ENCODE measurements at regions of chr1 and their contacts with region 1.

Region 1: GRCh38 chr1:78607334-78607927 is 12.8 kb upstream of the IFI44L start:
- DNase-seq: no peak
- ATAC-seq: no peak
- H3K4me3 ChIP-seq: no peak overlapping the region
- H3K27ac ChIP-seq: no peak overlapping the region
- H3K4me1 ChIP-seq: peaks cover 0 to 11% (median 0%) of the 10 kb centered on the region in 12 donors
- H3K27me3 ChIP-seq: peaks cover 0 to 7% (median 0%) of the 10 kb centered on the region in 9 donors
- CTCF ChIP-seq: peak; percentile 16 to 69 (median 48)
- POLR2A ChIP-seq: no peak

Region 2: DNA sequence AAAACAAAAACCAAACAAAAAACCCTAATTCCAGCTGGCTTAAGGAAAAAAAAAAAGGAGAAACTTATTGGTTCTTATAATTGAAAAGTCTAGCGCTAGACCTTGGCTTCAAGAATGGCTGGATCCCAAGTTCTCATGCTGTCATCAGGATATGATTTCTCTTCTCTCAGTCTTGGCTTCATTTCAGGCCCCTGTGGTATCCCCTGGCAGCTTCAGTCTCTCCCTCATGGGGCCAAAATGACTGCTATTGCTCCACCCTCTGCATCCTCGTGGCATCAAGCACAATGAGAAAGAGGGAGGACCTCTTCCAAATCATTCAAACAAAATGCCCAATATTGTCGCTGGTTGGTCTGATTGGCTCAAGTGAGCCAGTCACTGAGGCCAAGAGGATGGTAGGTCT is 480.9 kb before region 1 on chr1:
- intact Hi-C with region 1: loop called in 4 of 10 experiments (anchors 2 to 5 kb)
- DNase-seq: no peak
- ATAC-seq: no peak
- H3K4me3 ChIP-seq: no peak overlapping the region
- H3K27ac ChIP-seq: no peak overlapping the region
- H3K4me1 ChIP-seq: no peaks in the 10 kb centered on the region
- H3K27me3 ChIP-seq: no peaks in the 10 kb centered on the region
- CTCF ChIP-seq: no peak
- POLR2A ChIP-seq: no peak

Region 3: DNA sequence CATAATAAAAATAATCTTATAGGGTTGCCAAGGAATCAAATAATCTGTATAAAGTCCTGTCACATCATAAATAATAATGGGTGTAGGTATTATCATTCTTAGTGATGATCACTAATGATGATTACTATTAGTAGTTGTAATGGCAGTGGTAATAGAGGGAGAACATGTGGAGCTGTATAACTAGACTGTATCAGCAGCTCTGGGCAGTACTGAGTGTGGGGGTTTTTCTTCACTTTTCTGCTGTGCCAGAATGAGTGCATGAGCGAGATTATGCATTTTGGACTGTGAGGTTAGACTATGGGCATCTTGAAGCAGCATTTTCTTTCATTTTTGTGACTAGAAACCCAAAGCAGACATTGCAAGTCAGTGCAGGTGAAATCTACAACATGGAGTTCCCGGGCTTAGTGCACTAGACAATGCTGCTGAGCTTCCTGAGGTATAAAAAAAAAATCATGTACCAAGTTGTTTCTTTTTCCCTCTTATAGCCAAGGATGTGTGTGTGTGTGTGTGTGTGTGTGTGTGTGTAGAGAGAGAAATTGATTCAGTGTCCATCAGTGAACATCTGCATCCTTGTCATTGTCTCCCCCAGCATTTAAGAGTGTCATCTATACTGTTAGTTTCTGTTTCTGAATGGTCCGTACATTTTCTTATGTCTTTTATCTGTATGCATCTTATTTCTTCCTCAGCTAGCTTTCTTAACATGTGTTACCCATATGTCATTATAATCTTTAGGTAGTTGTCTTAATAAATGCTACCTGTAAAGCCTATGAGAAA is 475.1 kb before region 1 on chr1:
- intact Hi-C with region 1: loop called in 4 of 10 experiments (anchors 2 to 5 kb)
- DNase-seq: no peak
- ATAC-seq: no peak
- H3K4me3 ChIP-seq: no peak overlapping the region
- H3K27ac ChIP-seq: no peak overlapping the region
- H3K4me1 ChIP-seq: no peaks in the 10 kb centered on the region
- H3K27me3 ChIP-seq: no peaks in the 10 kb centered on the region
- CTCF ChIP-seq: no peak
- POLR2A ChIP-seq: no peak

Region 4: GRCh38 chr1:78145105-78145580 is 462.3 kb before region 1 on chr1:
- intact Hi-C with region 1: loop called (anchors 5 to 10 kb)
- DNase-seq: peak in 3 of 5 donors; percentile 34 to 38 (median 34)
- ATAC-seq: peak in 3 of 4 donors; percentile 56 to 76 (median 74)
- H3K4me3 ChIP-seq: no peak overlapping the region
- H3K27ac ChIP-seq: no peak overlapping the region
- H3K4me1 ChIP-seq: peaks cover 0 to 9% (median 0%) of the 10 kb centered on the region in 12 donors
- H3K27me3 ChIP-seq: no peaks in the 10 kb centered on the region
- CTCF ChIP-seq: peak; percentile 52 to 92 (median 80)
- POLR2A ChIP-seq: no peak

Region 5: DNA sequence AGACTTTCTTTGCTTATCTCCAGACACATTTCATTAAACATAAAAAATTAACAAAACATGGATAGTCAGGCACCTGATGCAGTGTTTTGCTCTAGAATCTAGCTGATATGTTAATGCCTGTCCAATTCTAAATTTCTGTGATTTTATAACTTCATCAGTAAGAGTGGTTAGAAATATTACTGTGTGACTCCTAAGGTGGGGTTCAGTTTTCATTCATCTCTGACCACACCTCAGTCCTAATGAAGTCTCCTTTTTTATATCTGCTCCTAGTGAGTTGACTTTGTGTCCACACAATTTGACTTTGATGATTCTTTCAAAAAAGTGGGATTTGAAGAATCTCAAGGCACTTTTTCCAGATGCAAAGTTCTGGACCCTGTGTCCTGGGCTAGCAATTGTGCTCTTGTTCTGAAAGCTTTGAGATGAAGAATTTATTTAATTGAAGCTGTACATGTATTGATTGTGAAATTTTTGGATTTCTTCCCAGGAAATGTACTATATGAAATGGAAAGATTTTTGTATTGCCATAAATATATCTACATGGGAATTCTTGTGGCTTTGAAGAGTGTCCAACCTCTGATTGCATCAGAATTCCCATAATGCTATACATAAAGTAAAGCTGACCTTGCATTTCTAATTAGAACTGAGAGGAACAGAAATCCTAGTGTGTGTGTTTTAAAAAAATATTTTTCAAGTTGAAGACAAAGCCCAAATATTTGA is 450.5 kb before region 1 on chr1:
- intact Hi-C with region 1: loop called in 1 of 10 experiments (anchors 10 kb)
- DNase-seq: no peak
- ATAC-seq: no peak
- H3K4me3 ChIP-seq: no peak overlapping the region
- H3K27ac ChIP-seq: no peak overlapping the region
- H3K4me1 ChIP-seq: no peaks in the 10 kb centered on the region
- H3K27me3 ChIP-seq: no peaks in the 10 kb centered on the region
- CTCF ChIP-seq: no peak
- POLR2A ChIP-seq: no peak

Region 6: GRCh38 chr1:78543941-78544643 is 63.3 kb before region 1 on chr1:
- intact Hi-C with region 1: no loop called
- DNase-seq: no peak
- ATAC-seq: no peak
- H3K4me3 ChIP-seq: no peak overlapping the region
- H3K27ac ChIP-seq: no peak overlapping the region
- H3K4me1 ChIP-seq: no peaks in the 10 kb centered on the region
- H3K27me3 ChIP-seq: no peaks in the 10 kb centered on the region
- CTCF ChIP-seq: no peak
- POLR2A ChIP-seq: no peak

Region 7: DNA sequence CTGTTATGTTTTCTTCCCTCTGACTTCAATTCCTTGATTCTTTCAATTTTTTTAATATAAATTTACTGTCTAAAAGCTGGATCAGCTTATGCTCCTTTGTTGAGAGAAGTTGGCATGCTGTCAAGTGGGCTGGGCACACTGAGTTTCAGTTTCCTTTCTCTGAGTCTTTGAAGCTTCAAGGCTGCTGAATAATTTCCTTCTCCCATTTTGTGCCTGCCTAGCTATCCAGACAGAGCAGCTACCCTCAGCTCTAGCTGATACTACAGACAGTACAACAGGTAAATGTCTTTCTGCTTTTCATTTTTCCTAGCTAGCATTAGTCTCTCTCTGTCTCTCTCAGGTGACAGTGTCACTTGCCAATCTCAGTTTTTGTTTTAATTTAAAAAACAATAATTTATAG is 42.2 kb after region 1 on chr1 and contains the start of gene IFI44:
- intact Hi-C with region 1: no loop called
- DNase-seq: peak; percentile 75 to 92 (median 87)
- ATAC-seq: peak; percentile 73 to 94 (median 89)
- H3K4me3 ChIP-seq: peak within 1 kb of the TSS; percentile 35 to 71 (median 56)
- H3K27ac ChIP-seq: peak within 1 kb of the TSS in 11 of 12 donors; percentile 46 to 86 (median 73)
- H3K4me1 ChIP-seq: peaks cover 0 to 57% (median 13%) of the 10 kb centered on the region in 12 donors
- H3K27me3 ChIP-seq: no peaks in the 10 kb centered on the region
- CTCF ChIP-seq: no peak
- POLR2A ChIP-seq: peak in 1 of 2 donors; percentile 61
- total RNA-seq, gene IFI44: 4.5 to 43.0 (median 9.6) TPM